Stomach (tissue), 19 donors: ENCODE measurements at regions of chr1 and their contacts with region 1.

Region 1: DNA sequence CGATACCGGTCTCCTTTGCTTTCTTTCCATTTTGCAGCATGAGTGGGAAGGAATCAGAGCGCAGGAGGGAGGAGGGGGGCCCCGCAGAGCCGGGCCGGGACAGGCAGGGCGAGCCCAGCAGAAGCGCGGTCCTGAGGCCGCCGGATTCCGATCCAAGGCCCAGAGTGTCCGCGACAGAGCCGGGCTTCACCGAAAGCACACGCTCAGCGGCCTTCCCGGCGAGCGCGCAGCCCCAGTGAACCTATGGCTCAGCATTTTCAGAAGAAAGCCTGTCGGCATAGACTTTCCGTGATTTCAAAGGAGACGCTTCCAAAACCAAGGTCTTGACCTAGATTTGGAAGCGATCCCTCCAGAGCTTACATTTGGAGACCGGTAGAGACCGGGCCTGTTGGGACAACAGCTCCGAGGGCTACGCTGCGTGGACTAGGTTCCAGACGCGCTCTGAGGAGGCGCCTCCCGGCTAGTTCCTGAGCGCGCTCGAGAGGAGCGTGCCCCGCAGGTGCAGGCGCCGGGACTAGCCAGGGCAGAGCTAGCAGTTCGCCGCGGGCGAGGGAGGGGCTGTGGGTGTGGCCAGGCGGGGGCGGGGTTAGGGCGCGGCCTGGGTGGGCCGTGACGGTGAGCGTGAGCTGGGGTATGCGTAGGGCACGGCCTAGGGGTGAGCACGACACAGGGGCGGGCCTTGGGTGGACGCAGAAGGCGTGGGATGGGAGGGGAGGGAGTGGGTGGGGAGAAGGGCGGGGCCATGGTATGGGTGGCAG is 27.8 kb upstream of the PRSS38 start:
- DNase-seq: peak; percentile 97
- H3K4me3 ChIP-seq: peak overlapping the region; percentile 54 to 67 (median 59)
- H3K27ac ChIP-seq: peak overlapping the region; percentile 53 to 90 (median 82)
- H3K4me1 ChIP-seq: peaks cover 21 to 32% (median 30%) of the 10 kb centered on the region in 4 donors
- H3K27me3 ChIP-seq: peaks cover 0 to 15% (median 0%) of the 10 kb centered on the region in 3 donors
- CTCF ChIP-seq: no peak
- EP300 ChIP-seq: no peak
- POLR2A ChIP-seq: peak in 2 of 4 donors; percentile 40 to 63

Region 2: GRCh38 chr1:227728059-227728891 is 59.4 kb before region 1 on chr1:
- intact Hi-C with region 1: no loop called
- DNase-seq: peak; percentile 87 to 93
- H3K4me3 ChIP-seq: peak overlapping the region; percentile 56 to 67 (median 58)
- H3K27ac ChIP-seq: peak overlapping the region; percentile 65 to 85 (median 80)
- H3K4me1 ChIP-seq: peaks cover 16 to 48% (median 38%) of the 10 kb centered on the region in 4 donors
- H3K27me3 ChIP-seq: peaks cover 0 to 3% (median 0%) of the 10 kb centered on the region in 3 donors
- CTCF ChIP-seq: no peak
- EP300 ChIP-seq: no peak
- POLR2A ChIP-seq: no peak

Region 3: DNA sequence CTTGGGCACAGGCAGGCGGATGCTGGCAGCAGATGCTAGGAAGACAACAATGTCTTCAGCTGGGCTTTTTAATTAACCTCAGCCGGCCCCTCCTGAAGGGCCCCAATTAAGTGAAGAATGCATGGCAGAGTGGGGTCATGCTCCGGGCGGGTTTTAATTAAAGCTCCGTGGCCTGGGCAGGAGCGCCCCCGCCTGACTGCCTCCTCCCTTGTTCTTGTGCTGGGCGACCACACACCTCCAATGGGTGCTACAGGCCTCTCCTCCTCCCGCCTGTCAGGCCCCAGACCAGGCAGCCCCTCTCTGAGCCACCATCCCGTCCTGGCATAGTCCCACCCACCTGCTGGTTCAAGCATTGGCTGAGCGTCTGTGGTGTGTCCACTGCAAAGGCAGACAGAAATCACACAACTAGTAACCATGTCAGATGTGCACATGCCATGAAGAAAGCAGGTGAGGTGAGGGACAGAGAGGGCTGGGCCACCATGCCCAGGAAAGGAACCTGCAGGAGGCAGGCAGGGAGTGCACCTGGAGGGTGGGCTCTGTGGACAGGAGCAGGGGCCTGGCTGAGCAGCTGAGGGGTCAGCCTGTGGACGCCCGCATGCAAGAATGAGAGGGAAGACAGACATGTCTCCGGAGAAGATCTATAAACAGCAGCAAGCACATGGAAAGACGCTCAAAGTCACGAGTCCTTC is 286.3 kb after region 1 on chr1:
- intact Hi-C with region 1: loop called (anchors 10 kb)
- DNase-seq: peak; percentile 31 to 61
- H3K4me3 ChIP-seq: no peak overlapping the region
- H3K27ac ChIP-seq: no peak overlapping the region
- H3K4me1 ChIP-seq: no peaks in the 10 kb centered on the region
- H3K27me3 ChIP-seq: peaks cover 0 to 37% (median 5%) of the 10 kb centered on the region in 3 donors
- CTCF ChIP-seq: peak in 1 of 7 experiments; percentile 11
- EP300 ChIP-seq: no peak
- POLR2A ChIP-seq: no peak